ENCODE measurements at regions of chr4 and their contacts with region 1.

Region 1: DNA sequence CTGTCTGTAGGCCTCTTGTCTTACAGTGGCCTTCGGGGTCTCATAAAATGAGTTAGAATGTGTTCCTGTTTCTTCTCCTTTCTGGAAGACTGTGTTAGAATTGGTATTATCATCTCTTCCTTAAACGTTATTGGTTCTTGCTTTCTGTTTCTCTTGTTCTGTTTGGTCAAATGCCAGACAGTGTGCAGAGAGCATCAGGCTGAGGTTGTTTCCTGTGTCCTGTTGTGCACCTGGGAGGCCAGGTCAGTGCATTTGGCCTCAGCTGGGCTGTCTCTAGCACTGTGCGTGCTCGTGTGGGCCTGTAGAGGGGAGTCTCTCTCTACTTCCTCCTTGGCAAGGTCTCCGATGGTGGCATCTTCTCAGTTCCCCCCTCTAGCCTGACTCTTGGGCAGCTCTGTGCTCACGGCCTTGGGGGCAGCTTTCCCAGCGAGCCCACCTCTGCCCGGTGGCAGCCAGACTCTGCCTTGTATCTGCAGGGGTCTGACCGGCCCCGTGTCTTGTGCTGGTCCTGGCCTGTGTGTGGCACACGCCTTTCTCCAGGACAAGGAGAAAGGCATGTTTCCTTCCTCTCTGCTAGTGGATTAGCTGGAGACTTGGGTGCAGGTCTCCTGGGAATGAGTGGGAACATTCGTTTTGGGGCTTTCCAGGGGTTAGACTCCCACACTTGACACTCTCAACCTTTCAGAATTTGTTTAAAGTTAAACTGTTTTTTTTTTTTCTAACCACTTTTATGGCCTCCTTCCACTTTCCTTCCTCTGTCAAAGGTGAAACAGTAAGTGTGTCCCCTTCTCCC is 62.3 kb downstream of the FAM193A start:
- DNase-seq: peak; percentile 81
- ATAC-seq: peak; percentile 94
- H3K4me3 ChIP-seq: peak overlapping the region in 1 of 5 experiments; percentile 8
- H3K4me3 Mint-ChIP-seq: peak overlapping the region; percentile 66
- H3K27ac ChIP-seq: peak overlapping the region; percentile 51 to 67
- H3K27ac Mint-ChIP-seq: peak overlapping the region; percentile 91
- H3K4me1 ChIP-seq: peaks cover 42 to 47% of the 10 kb centered on the region in 2 donors
- H3K4me1 Mint-ChIP-seq: peaks cover 60% of the 10 kb centered on the region
- H3K27me3 ChIP-seq: no peaks in the 10 kb centered on the region
- H3K27me3 Mint-ChIP-seq: no peaks in the 10 kb centered on the region
- CTCF ChIP-seq: peak; percentile 66

Region 2: DNA sequence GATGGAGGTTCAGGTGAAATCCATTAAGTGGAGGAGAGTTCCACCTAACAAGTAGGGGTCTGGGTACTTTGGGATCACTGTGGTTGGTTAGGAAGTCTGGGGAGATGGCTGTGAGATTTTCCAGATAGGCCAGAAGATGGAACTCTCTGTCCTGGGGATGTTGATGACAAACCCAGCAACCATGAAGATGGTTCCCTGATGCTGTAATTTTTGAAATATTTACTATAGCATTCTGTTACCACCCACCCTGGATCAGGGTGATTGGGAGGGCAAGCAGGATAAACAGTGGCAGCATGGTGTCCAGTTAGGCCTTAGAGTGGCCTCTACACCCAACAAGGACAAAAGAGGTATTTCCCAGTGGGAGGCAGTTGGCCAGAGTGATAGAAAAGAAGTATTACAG is 574.0 kb before region 1 on chr4:
- CTCF ChIA-PET with region 1: no interaction called
- POLR2A ChIA-PET with region 1: no interaction called
- intact Hi-C with region 1: no loop called
- DNase-seq: no peak
- ATAC-seq: no peak
- H3K4me3 ChIP-seq: no peak overlapping the region
- H3K4me3 Mint-ChIP-seq: no peak overlapping the region
- H3K27ac ChIP-seq: no peak overlapping the region
- H3K27ac Mint-ChIP-seq: no peak overlapping the region
- H3K4me1 ChIP-seq: no peaks in the 10 kb centered on the region
- H3K4me1 Mint-ChIP-seq: no peaks in the 10 kb centered on the region
- H3K27me3 ChIP-seq: peaks cover 0 to 21% (median 8%) of the 10 kb centered on the region in 4 experiments
- H3K27me3 Mint-ChIP-seq: peaks cover 65% of the 10 kb centered on the region
- CTCF ChIP-seq: no peak

Region 3: GRCh38 chr4:2552806-2553205 is 45.9 kb before region 1 on chr4:
- CTCF ChIA-PET with region 1: no interaction called
- POLR2A ChIA-PET with region 1: no interaction called
- intact Hi-C with region 1: loop called (anchors 5 kb)
- DNase-seq: no peak
- ATAC-seq: no peak
- H3K4me3 ChIP-seq: no peak overlapping the region
- H3K4me3 Mint-ChIP-seq: no peak overlapping the region
- H3K27ac ChIP-seq: no peak overlapping the region
- H3K27ac Mint-ChIP-seq: no peak overlapping the region
- H3K4me1 ChIP-seq: peaks cover 6 to 7% of the 10 kb centered on the region in 2 donors
- H3K4me1 Mint-ChIP-seq: peaks cover 44% of the 10 kb centered on the region
- H3K27me3 ChIP-seq: no peaks in the 10 kb centered on the region
- H3K27me3 Mint-ChIP-seq: no peaks in the 10 kb centered on the region
- CTCF ChIP-seq: no peak

Region 4: GRCh38 chr4:2712261-2712842 is 113.6 kb after region 1 on chr4:
- CTCF ChIA-PET with region 1: interaction called, 3 read pairs
- POLR2A ChIA-PET with region 1: no interaction called
- intact Hi-C with region 1: loop called (anchors 2 kb)
- DNase-seq: no peak
- ATAC-seq: no peak
- H3K4me3 ChIP-seq: no peak overlapping the region
- H3K4me3 Mint-ChIP-seq: no peak overlapping the region
- H3K27ac ChIP-seq: peak overlapping the region in 1 of 2 donors; percentile 26
- H3K27ac Mint-ChIP-seq: no peak overlapping the region
- H3K4me1 ChIP-seq: peaks cover 5 to 10% of the 10 kb centered on the region in 2 donors
- H3K4me1 Mint-ChIP-seq: peaks cover 20% of the 10 kb centered on the region
- H3K27me3 ChIP-seq: no peaks in the 10 kb centered on the region
- H3K27me3 Mint-ChIP-seq: no peaks in the 10 kb centered on the region
- CTCF ChIP-seq: no peak